Mammary epithelial cell (primary cell): ENCODE measurements at regions of chr12 and their contacts with region 1.

Region 1: GRCh38 chr12:70576346-70577282 is 60.6 kb downstream of the PTPRB start:
- DNase-seq: peak; percentile 62
- H3K4me3 ChIP-seq: no peak overlapping the region
- H3K27ac ChIP-seq: no peak overlapping the region
- H3K4me1 ChIP-seq: no peaks in the 10 kb centered on the region
- H3K27me3 ChIP-seq: no peaks in the 10 kb centered on the region
- CTCF ChIP-seq: peak; percentile 67 to 81

Region 2: GRCh38 chr12:69655377-69656336 is 921.0 kb before region 1 on chr12:
- CTCF ChIA-PET with region 1: no interaction called
- dilution Hi-C with region 1: no loop called
- in situ Hi-C with region 1: no loop called
- intact Hi-C with region 1: loop called (anchors 10 kb)
- DNase-seq: peak; percentile 76
- H3K4me3 ChIP-seq: no peak overlapping the region
- H3K27ac ChIP-seq: peak overlapping the region; percentile 89
- H3K4me1 ChIP-seq: peaks cover 33% of the 10 kb centered on the region
- H3K27me3 ChIP-seq: no peaks in the 10 kb centered on the region
- CTCF ChIP-seq: no peak

Region 3: DNA sequence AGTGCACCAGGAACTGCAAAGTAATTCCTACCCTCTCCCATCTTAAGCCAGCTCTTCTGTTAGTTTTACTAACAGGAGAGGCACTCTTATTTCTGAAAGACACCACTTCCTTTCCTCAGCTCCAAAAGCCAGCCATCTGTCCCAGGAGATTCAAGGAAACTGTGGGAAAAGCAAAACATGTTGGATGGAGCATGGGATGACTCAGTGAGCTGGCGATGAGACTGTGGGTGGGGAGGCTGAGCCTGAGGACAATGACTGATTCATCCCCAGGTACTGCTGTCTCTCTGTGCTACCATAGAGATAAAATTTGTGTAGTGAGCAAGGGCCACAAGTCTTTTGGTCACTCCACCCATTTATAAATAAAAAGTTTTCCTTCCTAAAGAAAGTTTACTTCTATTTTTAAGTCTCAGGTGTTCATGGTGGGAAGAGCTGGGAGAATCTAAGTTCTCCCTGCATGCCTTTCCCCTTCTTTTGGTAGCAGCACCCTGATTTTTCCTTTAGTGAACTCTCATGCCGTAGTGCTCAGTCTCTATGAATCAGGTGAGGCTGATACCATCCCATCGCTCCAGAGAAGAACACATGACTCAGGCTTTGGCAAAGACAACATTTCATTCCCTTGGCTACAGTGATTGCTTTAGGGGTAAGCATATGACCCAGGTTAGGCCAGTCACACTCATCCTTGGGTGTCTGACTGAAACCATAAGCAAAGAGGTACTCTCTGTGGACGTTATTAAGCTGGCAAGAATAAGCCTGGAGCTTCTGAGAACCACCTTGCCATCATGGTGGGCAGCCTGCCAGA is 610.0 kb before region 1 on chr12:
- CTCF ChIA-PET with region 1: no interaction called
- dilution Hi-C with region 1: no loop called
- in situ Hi-C with region 1: no loop called
- intact Hi-C with region 1: loop called (anchors 10 kb)
- DNase-seq: peak; percentile 99
- H3K4me3 ChIP-seq: no peak overlapping the region
- H3K27ac ChIP-seq: peak overlapping the region; percentile 100
- H3K4me1 ChIP-seq: peaks cover 20% of the 10 kb centered on the region
- H3K27me3 ChIP-seq: no peaks in the 10 kb centered on the region
- CTCF ChIP-seq: no peak

Region 4: DNA sequence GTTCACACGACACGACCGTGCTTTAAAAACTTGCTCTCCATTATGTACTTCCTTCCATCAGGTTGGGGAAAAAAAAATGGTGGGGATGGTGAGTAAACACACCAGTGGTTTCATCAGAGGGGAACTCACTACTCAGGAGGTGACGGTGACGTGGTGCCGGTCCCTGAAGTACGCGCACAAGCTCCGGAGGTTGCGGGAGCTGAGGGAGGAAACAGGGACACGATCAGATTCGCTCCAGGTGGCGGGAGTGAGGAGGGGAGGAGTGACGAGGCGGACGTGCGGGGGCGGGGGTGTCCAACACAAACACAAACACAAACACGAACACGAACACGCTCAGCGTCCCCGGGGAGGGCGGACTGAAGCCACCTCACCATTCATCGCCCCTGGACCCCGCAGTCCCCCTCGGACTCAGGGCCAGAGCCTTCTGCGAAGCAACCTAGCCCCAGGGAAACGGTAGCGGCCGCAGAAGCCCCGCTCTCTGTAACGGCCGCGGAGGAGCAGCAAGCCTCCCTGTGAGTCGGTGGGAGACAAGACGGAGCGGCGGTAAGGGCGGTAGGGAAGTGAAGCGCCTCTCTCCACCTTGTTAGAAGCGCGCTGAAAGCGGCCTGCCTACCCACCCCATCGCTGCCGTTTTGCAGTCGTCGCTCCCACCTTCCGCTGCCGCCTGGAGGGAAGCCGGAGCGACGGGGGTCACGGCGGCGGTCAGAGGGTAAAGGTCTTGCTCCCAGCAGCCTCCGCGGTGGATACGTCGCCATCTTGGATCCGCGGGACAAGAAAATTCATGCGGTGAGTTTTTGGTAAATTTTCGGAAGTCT is 333.7 kb before region 1 on chr12 and contains the start of gene CNOT2:
- CTCF ChIA-PET with region 1: no interaction called
- dilution Hi-C with region 1: no loop called
- in situ Hi-C with region 1: no loop called
- intact Hi-C with region 1: loop called (anchors 1 kb)
- DNase-seq: peak; percentile 91
- H3K4me3 ChIP-seq: peak within 1 kb of the TSS; percentile 64 to 96 (median 93)
- H3K27ac ChIP-seq: peak within 1 kb of the TSS; percentile 99
- H3K4me1 ChIP-seq: peaks cover 16% of the 10 kb centered on the region
- H3K27me3 ChIP-seq: no peaks in the 10 kb centered on the region
- CTCF ChIP-seq: no peak
- total RNA-seq, gene CNOT2: 62.5 to 123 TPM

Region 5: DNA sequence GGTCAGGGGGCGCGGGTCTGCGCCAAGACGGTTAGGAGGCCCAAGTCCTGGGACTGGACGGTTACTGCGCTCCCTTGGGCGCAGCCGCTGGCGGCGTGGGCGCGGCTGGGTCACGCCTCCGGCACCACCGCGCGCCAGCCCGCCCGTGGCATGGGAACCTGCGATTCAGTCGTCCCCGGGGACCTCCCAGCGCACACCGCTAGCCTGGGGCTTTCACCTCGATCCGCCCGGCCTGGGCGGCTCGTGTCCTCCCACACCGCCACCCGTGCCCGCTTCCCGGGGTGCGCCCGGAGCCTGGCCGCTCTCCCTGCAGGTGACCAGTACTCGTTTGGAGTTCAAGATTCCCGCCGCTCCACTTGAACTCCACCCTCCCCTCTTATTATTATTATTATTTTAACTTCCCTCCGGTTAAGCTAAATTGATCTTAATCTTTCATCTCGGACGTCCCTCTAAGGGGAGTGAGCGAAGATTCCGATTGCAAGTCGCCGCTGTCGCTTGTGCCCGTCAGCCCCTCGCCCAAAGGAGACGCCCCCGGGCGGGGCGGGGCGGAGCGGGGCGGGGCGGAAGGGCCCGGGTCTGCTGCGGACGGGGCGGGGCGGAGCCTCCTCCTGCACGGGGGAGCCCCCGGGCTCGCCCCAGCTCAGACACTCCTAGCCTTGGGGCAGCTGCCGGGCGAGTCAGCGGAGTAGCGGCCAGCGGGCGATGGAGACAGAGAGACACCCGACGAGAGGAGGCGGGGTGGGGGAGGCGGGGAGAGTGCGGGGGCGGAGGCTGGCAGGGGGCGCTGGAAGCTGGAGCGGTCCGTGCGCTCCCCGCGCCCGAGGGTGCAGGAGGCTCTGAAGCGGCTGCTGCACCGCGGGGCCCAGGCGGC is 210.7 kb before region 1 on chr12 and contains the start of gene KCNMB4:
- CTCF ChIA-PET with region 1: no interaction called
- dilution Hi-C with region 1: no loop called
- in situ Hi-C with region 1: loop called in 1 of 2 experiments (anchors 25 kb)
- intact Hi-C with region 1: loop called (anchors 2 kb)
- DNase-seq: peak; percentile 43
- H3K4me3 ChIP-seq: peak within 1 kb of the TSS; percentile 60 to 97 (median 62)
- H3K27ac ChIP-seq: no peak within 1 kb of the TSS
- H3K4me1 ChIP-seq: peaks cover 19% of the 10 kb centered on the region
- H3K27me3 ChIP-seq: no peaks in the 10 kb centered on the region
- CTCF ChIP-seq: no peak
- total RNA-seq, gene KCNMB4: 0.28 to 1.0 TPM

Region 6: GRCh38 chr12:70402600-70402999 is 174.0 kb before region 1 on chr12:
- CTCF ChIA-PET with region 1: interaction called, 17 read pairs
- dilution Hi-C with region 1: no loop called
- in situ Hi-C with region 1: no loop called
- intact Hi-C with region 1: loop called (anchors 1 kb)
- DNase-seq: no peak
- H3K4me3 ChIP-seq: no peak overlapping the region
- H3K27ac ChIP-seq: no peak overlapping the region
- H3K4me1 ChIP-seq: no peaks in the 10 kb centered on the region
- H3K27me3 ChIP-seq: no peaks in the 10 kb centered on the region
- CTCF ChIP-seq: peak in 1 of 2 donors; percentile 21